SK-N-SH (cell line): ENCODE measurements at regions of chr14 and their contacts with region 1.

Region 1: DNA sequence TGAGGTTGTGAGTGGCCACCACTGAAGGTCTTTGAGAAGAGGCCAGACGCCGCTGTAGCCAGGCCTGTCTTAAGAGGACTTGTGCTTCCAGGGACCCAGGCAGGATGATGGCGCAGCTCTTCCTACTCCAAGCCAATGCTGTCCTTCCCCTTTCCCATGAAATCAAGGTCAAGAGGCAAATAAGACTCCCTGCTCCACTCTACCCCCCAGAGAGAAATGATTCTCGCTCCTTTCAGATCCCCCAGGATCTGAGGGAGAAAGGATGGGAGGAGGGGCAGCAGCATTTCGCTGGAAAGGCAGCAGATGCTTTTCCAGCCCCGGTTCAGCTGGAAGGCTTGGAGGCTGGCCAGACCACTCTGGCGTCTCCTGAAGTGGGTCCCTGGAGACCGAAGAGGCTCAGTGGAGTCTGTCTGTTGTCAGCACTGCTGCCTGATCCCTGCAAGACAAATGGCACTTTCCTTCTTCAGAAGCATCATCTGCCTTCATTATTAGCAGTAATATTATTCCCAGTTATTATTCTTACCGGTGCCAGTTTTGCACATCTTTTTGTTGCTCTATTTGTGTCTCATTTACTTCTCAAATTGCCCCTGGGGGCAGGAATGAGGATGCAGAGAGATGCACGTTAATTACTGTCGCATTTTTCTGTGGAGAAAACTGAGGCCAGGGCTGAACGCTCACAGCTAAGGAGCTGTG is 51.4 kb downstream of the C14orf132 start:
- DNase-seq: peak; percentile 83
- H3K4me3 ChIP-seq: no peak overlapping the region; a peak in 1 of 4 replicates
- H3K27ac ChIP-seq: peak overlapping the region; percentile 33 to 99; a peak in 3 of 4 replicates
- H3K4me1 ChIP-seq: peaks cover 21 to 86% of the 10 kb centered on the region in 2 experiments
- H3K27me3 ChIP-seq: no peaks in the 10 kb centered on the region
- CTCF ChIP-seq: peak; percentile 29
- EP300 ChIP-seq: peak; percentile 38 to 76; a peak in 3 of 4 replicates
- RAD21 ChIP-seq: peak; percentile 37

Region 2: GRCh38 chr14:96053600-96054381 is 36.8 kb before region 1 on chr14:
- CTCF ChIA-PET with region 1: interaction called, 94 read pairs
- POLR2A ChIA-PET with region 1: interaction called, 4 read pairs
- DNase-seq: peak; percentile 47
- H3K4me3 ChIP-seq: no peak overlapping the region
- H3K27ac ChIP-seq: peak overlapping the region; percentile 72 to 84
- H3K4me1 ChIP-seq: peaks cover 10 to 90% of the 10 kb centered on the region in 2 experiments; a peak in 3 of 4 replicates
- H3K27me3 ChIP-seq: no peaks in the 10 kb centered on the region
- CTCF ChIP-seq: no peak
- EP300 ChIP-seq: no peak
- RAD21 ChIP-seq: no peak

Region 3: DNA sequence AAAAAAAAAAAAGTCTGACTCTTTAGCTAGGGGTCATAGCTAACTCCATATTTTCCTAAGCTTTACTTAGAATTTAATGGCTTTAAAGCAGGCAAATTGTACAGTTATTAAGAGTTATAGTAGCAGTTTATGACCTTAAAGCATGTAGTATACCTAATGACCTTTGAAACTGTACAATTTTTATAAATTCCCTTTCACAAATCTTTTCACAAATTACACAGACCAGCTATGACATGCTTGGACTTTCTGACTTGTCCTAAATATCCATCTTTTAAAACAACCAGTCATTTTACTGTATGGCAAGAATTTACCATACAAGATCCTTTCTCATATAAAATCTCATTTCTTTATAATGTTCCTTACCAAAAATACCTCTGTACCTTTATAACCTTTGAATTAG is 23.4 kb after region 1 on chr14:
- CTCF ChIA-PET with region 1: no interaction called
- POLR2A ChIA-PET with region 1: no interaction called
- DNase-seq: no peak
- H3K4me3 ChIP-seq: no peak overlapping the region
- H3K27ac ChIP-seq: no peak overlapping the region
- H3K4me1 ChIP-seq: peaks cover 0 to 25% of the 10 kb centered on the region in 2 experiments; a peak in 2 of 4 replicates
- H3K27me3 ChIP-seq: no peaks in the 10 kb centered on the region
- CTCF ChIP-seq: no peak
- EP300 ChIP-seq: no peak
- RAD21 ChIP-seq: no peak